Activated CD8-positive, alpha-beta T cell treated with anti-CD3 and anti-CD28 coated beads, Interleukin-2, amount 10 ng/mL, durations not matched to agents 7 days and 5 days (primary cell): ENCODE measurements at regions of chr1 and their contacts with region 1.

Region 1: DNA sequence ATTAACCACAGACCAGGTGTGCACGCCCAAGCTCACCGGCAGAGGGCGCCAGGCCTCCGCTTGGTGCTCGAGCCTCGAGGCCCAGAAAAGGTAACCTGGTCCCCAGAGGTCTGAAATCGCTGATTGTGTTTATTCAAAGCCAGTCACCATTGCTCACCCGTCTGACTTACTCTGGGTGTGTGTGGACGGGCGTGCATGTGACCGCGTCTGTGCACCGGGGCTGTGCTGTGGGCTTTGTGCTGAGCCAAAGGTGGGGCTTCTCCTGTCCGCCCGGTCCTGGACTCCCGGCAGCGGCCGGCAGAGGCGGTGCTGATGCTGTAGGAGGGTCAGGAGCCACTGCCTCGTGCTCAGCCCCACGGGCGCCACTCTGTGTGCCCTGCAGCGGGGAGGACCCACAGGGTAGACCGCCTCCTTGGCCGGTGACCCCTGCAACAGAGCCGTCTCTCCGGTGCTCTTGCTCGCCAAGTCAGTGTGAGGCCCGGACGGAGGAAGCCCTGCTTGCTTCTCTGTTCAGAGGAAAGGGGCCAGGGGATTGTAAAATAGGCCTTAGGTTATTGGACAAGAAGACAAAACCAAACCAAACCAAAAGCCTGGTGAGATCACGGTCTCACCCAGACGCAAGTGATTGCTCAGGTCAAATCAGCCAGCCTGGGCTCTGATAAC is 32.0 kb upstream of the BTG2 start:
- DNase-seq: peak; percentile 93
- ATAC-seq: peak; percentile 75
- H3K4me3 Mint-ChIP-seq: peak overlapping the region; percentile 70
- H3K27ac Mint-ChIP-seq: peak overlapping the region; percentile 82
- H3K4me1 Mint-ChIP-seq: peaks cover 75% of the 10 kb centered on the region
- H3K27me3 Mint-ChIP-seq: no peaks in the 10 kb centered on the region

Region 2: GRCh38 chr1:203290261-203291089 is 17.1 kb after region 1 on chr1:
- CTCF ChIA-PET with region 1: interaction called, 461 read pairs
- POLR2A ChIA-PET with region 1: interaction called, 243 read pairs
- DNase-seq: peak; percentile 97
- ATAC-seq: peak; percentile 51
- H3K4me3 Mint-ChIP-seq: peak overlapping the region; percentile 81
- H3K27ac Mint-ChIP-seq: peak overlapping the region; percentile 99
- H3K4me1 Mint-ChIP-seq: peaks cover 86% of the 10 kb centered on the region
- H3K27me3 Mint-ChIP-seq: no peaks in the 10 kb centered on the region

Region 3: GRCh38 chr1:203299169-203299568 is 25.8 kb after region 1 on chr1:
- CTCF ChIA-PET with region 1: interaction called, 461 read pairs
- POLR2A ChIA-PET with region 1: interaction called, 9 read pairs
- DNase-seq: no peak
- ATAC-seq: peak; percentile 35
- H3K4me3 Mint-ChIP-seq: no peak overlapping the region
- H3K27ac Mint-ChIP-seq: no peak overlapping the region
- H3K4me1 Mint-ChIP-seq: peaks cover 66% of the 10 kb centered on the region
- H3K27me3 Mint-ChIP-seq: no peaks in the 10 kb centered on the region

Region 4: GRCh38 chr1:203304919-203305808 is 31.8 kb after region 1 on chr1 and contains the start of gene BTG2:
- CTCF ChIA-PET with region 1: interaction called, 222 read pairs
- POLR2A ChIA-PET with region 1: interaction called, 102 read pairs
- DNase-seq: peak; percentile 93
- ATAC-seq: peak; percentile 80
- H3K4me3 Mint-ChIP-seq: peak within 1 kb of the TSS; percentile 86
- H3K27ac Mint-ChIP-seq: peak within 1 kb of the TSS; percentile 89
- H3K4me1 Mint-ChIP-seq: peaks cover 67% of the 10 kb centered on the region
- H3K27me3 Mint-ChIP-seq: no peaks in the 10 kb centered on the region
- total RNA-seq, gene BTG2: 58.6 to 58.9 TPM

Region 5: DNA sequence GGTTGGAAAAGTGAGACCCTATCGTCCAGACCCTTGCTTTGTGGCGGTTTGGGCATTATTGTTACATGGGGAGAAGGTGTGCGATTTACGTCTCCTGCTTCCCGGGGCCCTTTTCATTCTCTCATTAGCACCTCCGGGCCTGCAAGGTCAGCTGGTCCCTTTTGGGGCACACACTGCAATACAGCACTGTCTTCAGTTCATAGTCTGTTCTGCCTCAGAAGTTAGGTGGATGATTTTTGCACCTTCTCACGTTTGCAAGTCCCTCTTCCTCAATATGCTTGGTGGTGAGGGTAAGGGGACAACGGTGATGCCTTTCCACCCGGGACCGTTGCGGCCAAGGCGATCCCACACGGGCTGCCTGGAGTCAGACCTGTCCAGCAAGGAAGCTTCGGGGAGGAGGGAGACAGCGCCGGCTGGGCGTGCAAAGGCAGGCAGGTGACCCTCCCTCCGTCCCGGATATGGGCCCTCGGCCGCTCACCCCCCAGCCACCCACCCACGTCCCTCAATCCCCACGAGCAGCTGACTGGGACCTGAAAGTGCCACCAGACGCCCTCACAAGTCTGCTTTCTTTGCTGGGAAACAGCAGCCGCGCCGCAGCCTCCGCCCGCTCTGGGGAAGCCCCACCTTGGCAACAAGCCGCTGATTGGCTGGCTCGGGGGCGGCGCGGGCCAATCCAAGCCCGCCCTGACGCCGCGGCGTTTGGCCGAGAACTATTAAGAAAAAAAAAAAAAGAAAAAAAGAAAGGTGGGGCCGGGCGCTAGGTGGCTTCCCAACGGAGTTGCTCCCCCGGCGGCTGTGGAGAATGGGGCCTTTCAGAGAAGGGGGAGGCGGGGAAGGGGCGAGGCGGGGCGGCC is 53.7 kb after region 1 on chr1:
- CTCF ChIA-PET with region 1: interaction called, 841 read pairs
- POLR2A ChIA-PET with region 1: interaction called, 81 read pairs
- DNase-seq: peak; percentile 95
- ATAC-seq: peak; percentile 92
- H3K4me3 Mint-ChIP-seq: peak overlapping the region; percentile 73
- H3K27ac Mint-ChIP-seq: peak overlapping the region; percentile 93
- H3K4me1 Mint-ChIP-seq: peaks cover 66% of the 10 kb centered on the region
- H3K27me3 Mint-ChIP-seq: peaks cover 2% of the 10 kb centered on the region

Region 6: DNA sequence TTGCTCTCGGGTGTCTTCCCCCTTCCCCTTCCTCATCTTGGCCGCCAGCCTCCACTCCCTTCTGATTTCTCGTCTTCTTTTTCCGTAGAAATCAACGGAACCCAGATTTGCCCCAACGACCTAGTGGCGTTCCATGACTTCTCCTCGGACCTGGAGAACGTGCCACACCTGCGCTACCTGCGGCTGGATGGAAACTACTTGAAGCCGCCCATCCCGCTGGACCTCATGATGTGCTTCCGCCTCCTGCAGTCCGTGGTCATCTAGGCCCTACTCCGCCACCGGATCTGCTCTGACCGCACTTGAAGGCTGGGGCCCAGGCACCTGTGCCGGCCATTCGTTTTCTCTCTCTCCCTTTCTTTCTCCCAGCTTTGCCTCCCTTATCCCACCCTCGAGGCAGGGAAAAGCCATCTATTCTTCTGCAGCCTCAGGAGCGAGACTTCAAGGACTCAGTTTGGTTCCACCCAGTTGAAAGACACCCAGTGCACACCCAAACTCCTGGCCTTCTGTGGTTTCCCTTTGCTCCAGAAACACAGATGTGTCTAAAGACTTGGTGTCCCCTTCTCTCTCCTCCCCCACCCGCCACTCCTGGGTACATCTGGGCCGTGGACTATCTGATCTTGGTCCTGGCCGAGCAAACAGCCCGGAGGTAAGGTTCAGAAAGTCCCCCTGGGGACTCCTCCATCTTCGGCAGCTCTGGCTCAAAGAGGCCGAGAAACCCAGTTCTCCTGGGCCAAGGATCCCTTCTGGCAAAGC is 213.5 kb after region 1 on chr1:
- CTCF ChIA-PET with region 1: interaction called, 204 read pairs
- POLR2A ChIA-PET with region 1: no interaction called
- DNase-seq: no peak
- ATAC-seq: no peak
- H3K4me3 Mint-ChIP-seq: peak overlapping the region; percentile 61
- H3K27ac Mint-ChIP-seq: peak overlapping the region; percentile 31
- H3K4me1 Mint-ChIP-seq: no peaks in the 10 kb centered on the region
- H3K27me3 Mint-ChIP-seq: no peaks in the 10 kb centered on the region